SK-N-SH (cell line): ENCODE measurements at regions of chr1 and their contacts with region 1.

Region 1: GRCh38 chr1:110766025-110766647 is 91.4 kb upstream of the KCNA3 start:
- DNase-seq: peak; percentile 63
- H3K4me3 ChIP-seq: peak overlapping the region in 1 of 2 experiments; percentile 46; a peak in 1 of 4 replicates
- H3K27ac ChIP-seq: no peak overlapping the region
- H3K4me1 ChIP-seq: no peaks in the 10 kb centered on the region; a peak in 1 of 4 replicates
- H3K27me3 ChIP-seq: no peaks in the 10 kb centered on the region
- CTCF ChIP-seq: peak; percentile 91
- EP300 ChIP-seq: no peak
- RAD21 ChIP-seq: peak; percentile 94

Region 2: DNA sequence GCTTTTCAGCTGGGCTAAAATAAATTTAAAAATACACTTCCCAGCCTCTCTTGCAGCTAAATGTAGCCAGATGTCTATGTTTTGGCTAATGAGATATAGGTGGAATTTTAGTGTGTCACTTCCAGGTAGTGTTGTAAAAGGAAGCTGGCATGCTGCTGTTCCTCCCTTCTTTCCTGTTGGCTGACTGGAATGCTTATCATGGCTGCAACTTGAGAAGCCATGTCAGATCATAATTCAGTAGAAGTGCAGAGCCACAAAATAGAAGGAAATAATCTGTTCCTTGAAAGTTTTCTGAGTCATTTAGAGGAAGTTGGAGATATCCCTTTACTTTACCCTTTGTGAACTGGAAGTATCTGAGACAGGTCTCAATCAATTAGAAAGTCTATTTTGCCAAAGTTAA is 437.9 kb before region 1 on chr1:
- CTCF ChIA-PET with region 1: no interaction called
- POLR2A ChIA-PET with region 1: no interaction called
- DNase-seq: no peak
- H3K4me3 ChIP-seq: no peak overlapping the region
- H3K27ac ChIP-seq: no peak overlapping the region
- H3K4me1 ChIP-seq: no peaks in the 10 kb centered on the region
- H3K27me3 ChIP-seq: no peaks in the 10 kb centered on the region
- CTCF ChIP-seq: no peak
- EP300 ChIP-seq: no peak
- RAD21 ChIP-seq: no peak

Region 3: DNA sequence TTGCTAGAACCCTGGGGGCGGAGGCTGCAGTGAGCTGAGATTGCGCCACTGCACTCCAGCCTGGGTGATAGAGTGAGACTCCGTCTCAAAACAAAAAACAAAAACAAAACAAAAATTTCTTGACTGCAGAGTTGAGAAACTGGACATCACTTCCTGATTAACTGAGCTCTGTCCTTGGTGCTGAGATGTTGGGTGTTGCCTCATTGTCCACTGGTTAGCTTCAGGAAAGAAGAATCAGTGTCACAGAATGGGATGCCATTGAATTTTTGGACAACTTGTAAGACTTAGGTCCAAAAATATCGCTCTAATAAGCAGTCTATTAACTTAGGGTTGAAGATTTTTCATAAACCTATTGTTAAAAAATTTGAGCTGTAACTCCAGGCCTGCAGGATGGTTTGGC is 223.4 kb before region 1 on chr1:
- CTCF ChIA-PET with region 1: interaction called, 10 read pairs
- POLR2A ChIA-PET with region 1: no interaction called
- DNase-seq: no peak
- H3K4me3 ChIP-seq: no peak overlapping the region
- H3K27ac ChIP-seq: no peak overlapping the region
- H3K4me1 ChIP-seq: no peaks in the 10 kb centered on the region
- H3K27me3 ChIP-seq: no peaks in the 10 kb centered on the region
- CTCF ChIP-seq: no peak
- EP300 ChIP-seq: no peak
- RAD21 ChIP-seq: no peak

Region 4: GRCh38 chr1:110630839-110631663 is 135.1 kb before region 1 on chr1:
- CTCF ChIA-PET with region 1: interaction called, 204 read pairs
- POLR2A ChIA-PET with region 1: no interaction called
- DNase-seq: peak; percentile 78
- H3K4me3 ChIP-seq: no peak overlapping the region
- H3K27ac ChIP-seq: no peak overlapping the region
- H3K4me1 ChIP-seq: no peaks in the 10 kb centered on the region; a peak in 1 of 4 replicates
- H3K27me3 ChIP-seq: peaks cover 7% of the 10 kb centered on the region; the same call in 1 of the 2 replicates
- CTCF ChIP-seq: peak; percentile 78
- EP300 ChIP-seq: no peak
- RAD21 ChIP-seq: peak; percentile 84

Region 5: GRCh38 chr1:110657351-110657750 is 108.8 kb before region 1 on chr1:
- CTCF ChIA-PET with region 1: interaction called, 11 read pairs
- POLR2A ChIA-PET with region 1: no interaction called
- DNase-seq: no peak
- H3K4me3 ChIP-seq: no peak overlapping the region
- H3K27ac ChIP-seq: no peak overlapping the region
- H3K4me1 ChIP-seq: no peaks in the 10 kb centered on the region
- H3K27me3 ChIP-seq: no peaks in the 10 kb centered on the region
- CTCF ChIP-seq: no peak
- EP300 ChIP-seq: no peak
- RAD21 ChIP-seq: no peak

Region 6: GRCh38 chr1:110743397-110743796 is 22.7 kb before region 1 on chr1:
- CTCF ChIA-PET with region 1: interaction called, 13 read pairs
- POLR2A ChIA-PET with region 1: no interaction called
- DNase-seq: no peak
- H3K4me3 ChIP-seq: no peak overlapping the region
- H3K27ac ChIP-seq: no peak overlapping the region
- H3K4me1 ChIP-seq: no peaks in the 10 kb centered on the region
- H3K27me3 ChIP-seq: no peaks in the 10 kb centered on the region
- CTCF ChIP-seq: no peak
- EP300 ChIP-seq: no peak
- RAD21 ChIP-seq: no peak

Region 7: DNA sequence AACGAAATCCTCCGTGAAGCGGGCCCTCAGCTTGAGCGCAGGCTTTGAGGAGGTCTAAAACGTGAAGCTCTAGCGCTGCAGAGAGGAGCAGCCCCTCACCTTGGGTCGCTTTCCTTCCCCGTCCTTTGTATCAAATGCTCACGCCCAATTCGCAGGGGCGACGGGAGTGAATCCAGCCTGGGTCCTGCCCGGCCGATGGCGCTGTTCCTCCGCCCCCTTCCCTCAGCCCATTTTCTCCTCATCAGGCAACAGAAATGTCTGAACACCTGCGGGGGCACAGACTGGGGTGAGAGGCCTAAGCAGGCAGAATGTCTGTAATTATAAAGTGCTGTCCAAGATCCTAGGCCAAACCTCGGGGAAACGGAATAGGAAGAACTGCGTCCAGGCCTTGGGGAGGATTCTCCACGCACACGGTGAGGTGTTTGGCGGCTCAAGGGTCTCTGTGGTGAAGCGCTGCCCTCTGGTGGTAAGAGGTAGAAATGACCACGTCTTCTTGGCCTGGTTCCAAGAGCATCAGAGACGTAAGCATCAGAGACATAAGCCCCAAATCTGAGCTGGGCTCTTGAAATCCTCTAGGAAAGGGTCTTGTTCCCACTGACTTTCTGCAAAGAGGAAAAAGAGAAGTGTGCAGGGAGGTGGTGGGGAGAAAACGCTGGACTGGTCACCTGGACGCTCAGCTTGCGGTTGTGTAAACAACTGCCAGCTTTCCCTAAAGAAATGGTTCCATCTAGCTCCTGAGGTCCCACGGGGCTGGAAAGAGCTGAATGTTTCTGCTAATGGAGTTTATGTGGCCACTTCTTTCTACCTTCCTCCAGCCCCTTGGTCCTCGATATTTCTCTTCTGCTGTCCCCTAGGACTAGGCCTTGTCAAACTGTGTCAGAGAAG is 14.7 kb after region 1 on chr1:
- CTCF ChIA-PET with region 1: interaction called, 201 read pairs
- POLR2A ChIA-PET with region 1: no interaction called
- DNase-seq: peak; percentile 69
- H3K4me3 ChIP-seq: no peak overlapping the region; a peak in 1 of 4 replicates
- H3K27ac ChIP-seq: no peak overlapping the region
- H3K4me1 ChIP-seq: no peaks in the 10 kb centered on the region; a peak in 1 of 4 replicates
- H3K27me3 ChIP-seq: no peaks in the 10 kb centered on the region; the same call in 1 of the 2 replicates
- CTCF ChIP-seq: peak; percentile 75
- EP300 ChIP-seq: no peak
- RAD21 ChIP-seq: peak; percentile 79